HepG2 (cell line): ENCODE measurements at regions of chr1 and their contacts with region 1.

Region 1: DNA sequence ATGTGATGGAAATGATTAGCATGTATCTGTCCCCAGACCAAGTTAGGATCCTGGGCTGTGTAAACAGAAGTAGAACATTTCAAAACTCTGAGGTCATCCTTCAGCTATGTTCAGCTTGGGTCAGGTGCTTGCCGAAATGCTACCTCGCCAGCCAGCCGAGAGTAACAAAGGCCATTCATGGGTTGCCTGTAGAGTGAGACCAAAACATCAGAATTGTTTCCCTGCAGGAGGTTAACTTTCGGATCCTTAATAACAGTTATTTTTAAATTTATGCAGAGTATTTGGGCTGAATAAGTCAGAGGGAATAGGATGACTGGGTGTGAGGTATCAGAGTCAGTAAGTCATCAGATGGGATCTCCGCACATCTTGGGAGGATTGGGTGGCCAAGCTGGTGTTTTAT is 35.6 kb downstream of the SMYD2 start:
- DNase-seq: peak; percentile 42
- ATAC-seq: 0 out of 3 replicates have a peak, but pooled peaks have one; percentile 14
- H3K4me3 ChIP-seq: no peak overlapping the region
- H3K27ac ChIP-seq: no peak overlapping the region
- H3K4me1 ChIP-seq: peaks cover 52% of the 10 kb centered on the region
- H3K27me3 ChIP-seq: no peaks in the 10 kb centered on the region
- CTCF ChIP-seq: no peak
- EP300 ChIP-seq: no peak
- POLR2A ChIP-seq: no peak
- RAD21 ChIP-seq: no peak

Region 2: DNA sequence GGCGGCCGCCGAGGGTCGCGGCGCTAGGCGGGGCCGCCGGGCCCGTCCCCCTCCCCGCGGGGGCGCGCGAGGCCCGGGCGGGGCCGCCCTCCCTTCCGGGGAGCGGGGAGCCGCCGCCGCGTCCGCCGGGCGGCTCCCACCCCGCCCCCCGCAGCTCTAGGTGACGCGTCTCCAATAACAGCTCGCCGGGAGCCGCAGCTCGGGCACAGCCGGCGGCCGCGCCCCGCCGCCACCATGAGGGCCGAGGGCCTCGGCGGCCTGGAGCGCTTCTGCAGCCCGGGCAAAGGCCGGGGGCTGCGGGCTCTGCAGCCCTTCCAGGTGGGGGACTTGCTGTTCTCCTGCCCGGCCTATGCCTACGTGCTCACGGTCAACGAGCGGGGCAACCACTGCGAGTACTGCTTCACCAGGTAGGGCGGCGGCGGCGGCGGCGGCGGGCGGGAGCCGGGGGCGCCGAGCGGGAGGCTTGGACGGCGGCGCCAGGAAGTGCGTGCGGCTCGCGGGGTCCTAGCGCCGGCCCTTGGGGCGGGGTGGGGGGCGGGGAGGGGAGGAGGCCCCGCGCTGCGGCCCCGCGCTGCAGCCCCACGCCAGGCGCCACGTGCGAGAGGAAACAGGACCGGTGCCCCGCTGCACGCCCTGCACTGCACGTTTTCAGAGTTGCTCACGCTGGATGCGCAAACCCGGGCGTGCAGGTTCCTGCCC is 35.4 kb before region 1 on chr1 and contains the start of gene SMYD2:
- CTCF ChIA-PET with region 1: no interaction called
- POLR2A ChIA-PET with region 1: interaction called, 12 read pairs
- in situ Hi-C with region 1: no loop called
- intact Hi-C with region 1: loop called (anchors 2 kb)
- DNase-seq: peak; percentile 56
- ATAC-seq: peak; percentile 74
- H3K4me3 ChIP-seq: peak within 1 kb of the TSS; percentile 84 to 94 (median 92)
- H3K27ac ChIP-seq: peak within 1 kb of the TSS; percentile 98
- H3K4me1 ChIP-seq: peaks cover 61% of the 10 kb centered on the region
- H3K27me3 ChIP-seq: no peaks in the 10 kb centered on the region; a peak in 1 of 5 replicates
- CTCF ChIP-seq: no peak
- EP300 ChIP-seq: no peak
- POLR2A ChIP-seq: peak; percentile 74 to 83
- RAD21 ChIP-seq: no peak
- total RNA-seq, gene SMYD2: 72.7 and 82.7 TPM in 2 replicates